ENCODE measurements at regions of chr10 and their contacts with region 1.

Region 1: GRCh38 chr10:103069453-103070331 is 123.4 kb downstream of the NT5C2 start:
- DNase-seq: peak; percentile 82
- ATAC-seq: peak; percentile 85
- H3K4me3 Mint-ChIP-seq: peak overlapping the region; percentile 49
- H3K27ac Mint-ChIP-seq: peak overlapping the region; percentile 89
- H3K4me1 Mint-ChIP-seq: peaks cover 39% of the 10 kb centered on the region
- H3K27me3 Mint-ChIP-seq: no peaks in the 10 kb centered on the region

Region 2: DNA sequence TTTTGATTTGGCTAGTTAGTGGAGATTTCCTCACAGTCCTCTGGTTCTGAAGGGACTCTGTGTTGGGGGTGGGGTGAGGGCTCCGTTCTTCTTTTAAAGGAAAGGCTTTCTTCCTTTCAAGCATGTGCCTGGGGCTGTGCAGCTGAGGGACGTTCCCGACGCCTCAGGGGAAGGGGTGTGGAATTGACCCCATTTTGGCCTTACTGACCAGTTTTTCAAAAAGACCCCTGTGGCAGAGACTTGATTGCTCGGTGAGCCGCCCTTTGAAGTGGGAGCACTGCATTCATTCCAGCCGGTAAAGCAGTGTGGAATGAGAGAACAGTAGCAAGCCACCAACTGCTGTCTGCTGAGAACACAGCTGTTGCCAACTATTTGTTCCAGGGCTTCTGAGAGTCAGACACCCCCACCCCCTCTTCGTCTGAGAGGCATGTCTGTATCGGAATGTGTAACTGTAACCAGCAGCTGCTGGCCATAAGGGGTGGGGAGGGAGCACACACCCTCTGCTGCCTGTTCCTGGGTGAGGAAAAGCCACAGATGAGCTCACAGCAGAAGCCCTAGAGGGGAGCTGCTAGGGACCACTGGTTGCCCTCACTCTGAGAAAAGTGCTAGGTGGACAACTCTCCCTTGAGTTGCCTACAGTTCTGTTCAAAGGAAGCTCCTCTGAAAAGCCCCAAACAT is 292.8 kb before region 1 on chr10:
- CTCF ChIA-PET with region 1: no interaction called
- POLR2A ChIA-PET with region 1: no interaction called
- DNase-seq: no peak
- ATAC-seq: peak; percentile 13
- H3K4me3 Mint-ChIP-seq: no peak overlapping the region
- H3K27ac Mint-ChIP-seq: no peak overlapping the region
- H3K4me1 Mint-ChIP-seq: peaks cover 51% of the 10 kb centered on the region
- H3K27me3 Mint-ChIP-seq: no peaks in the 10 kb centered on the region

Region 3: GRCh38 chr10:103053659-103054581 is 15.8 kb before region 1 on chr10:
- CTCF ChIA-PET with region 1: interaction called, 24 read pairs
- POLR2A ChIA-PET with region 1: no interaction called
- DNase-seq: peak; percentile 83
- ATAC-seq: peak; percentile 90
- H3K4me3 Mint-ChIP-seq: peak overlapping the region; percentile 79
- H3K27ac Mint-ChIP-seq: peak overlapping the region; percentile 90
- H3K4me1 Mint-ChIP-seq: peaks cover 32% of the 10 kb centered on the region
- H3K27me3 Mint-ChIP-seq: no peaks in the 10 kb centered on the region

Region 4: GRCh38 chr10:103244663-103245271 is 175.1 kb after region 1 on chr10:
- CTCF ChIA-PET with region 1: interaction called, 14 read pairs
- POLR2A ChIA-PET with region 1: no interaction called
- DNase-seq: peak; percentile 73
- ATAC-seq: peak; percentile 80
- H3K4me3 Mint-ChIP-seq: no peak overlapping the region
- H3K27ac Mint-ChIP-seq: no peak overlapping the region
- H3K4me1 Mint-ChIP-seq: peaks cover 19% of the 10 kb centered on the region
- H3K27me3 Mint-ChIP-seq: peaks cover 6% of the 10 kb centered on the region

Region 5: GRCh38 chr10:103265717-103266329 is 196.1 kb after region 1 on chr10:
- CTCF ChIA-PET with region 1: no interaction called
- POLR2A ChIA-PET with region 1: no interaction called
- DNase-seq: peak; percentile 71
- ATAC-seq: no peak
- H3K4me3 Mint-ChIP-seq: no peak overlapping the region
- H3K27ac Mint-ChIP-seq: no peak overlapping the region
- H3K4me1 Mint-ChIP-seq: no peaks in the 10 kb centered on the region
- H3K27me3 Mint-ChIP-seq: peaks cover 20% of the 10 kb centered on the region